H1 (cell line): ENCODE measurements at regions of chr1 and their contacts with region 1.

Region 1: DNA sequence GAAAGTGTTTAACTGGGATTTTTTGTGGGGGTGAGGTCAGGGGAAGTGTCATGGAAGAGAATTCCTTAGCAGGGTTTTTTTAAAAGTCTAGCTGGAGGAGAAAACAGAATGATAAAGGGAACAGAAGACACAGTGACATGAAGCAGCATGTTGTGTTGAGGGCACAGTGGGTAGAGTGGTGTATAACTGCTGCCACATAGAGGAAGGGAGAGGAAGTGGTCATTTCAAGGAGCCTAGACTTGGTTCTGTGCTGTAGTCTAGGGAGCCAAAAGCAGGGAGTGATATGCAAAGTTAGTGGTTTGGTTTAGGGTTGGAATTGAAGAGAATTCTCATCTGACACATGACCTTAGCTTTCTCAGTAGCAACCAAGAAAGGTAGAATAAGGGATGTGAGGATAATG is 10.2 kb downstream of the EEIG2 start:
- DNase-seq: no peak
- H3K4me3 ChIP-seq: no peak overlapping the region
- H3K27ac ChIP-seq: no peak overlapping the region
- H3K4me1 ChIP-seq: no peaks in the 10 kb centered on the region
- H3K27me3 ChIP-seq: no peaks in the 10 kb centered on the region
- CTCF ChIP-seq: peak; percentile 7 to 76 (median 57)
- EP300 ChIP-seq: no peak
- POLR2A ChIP-seq: no peak
- RAD21 ChIP-seq: peak; percentile 62 to 68

Region 2: DNA sequence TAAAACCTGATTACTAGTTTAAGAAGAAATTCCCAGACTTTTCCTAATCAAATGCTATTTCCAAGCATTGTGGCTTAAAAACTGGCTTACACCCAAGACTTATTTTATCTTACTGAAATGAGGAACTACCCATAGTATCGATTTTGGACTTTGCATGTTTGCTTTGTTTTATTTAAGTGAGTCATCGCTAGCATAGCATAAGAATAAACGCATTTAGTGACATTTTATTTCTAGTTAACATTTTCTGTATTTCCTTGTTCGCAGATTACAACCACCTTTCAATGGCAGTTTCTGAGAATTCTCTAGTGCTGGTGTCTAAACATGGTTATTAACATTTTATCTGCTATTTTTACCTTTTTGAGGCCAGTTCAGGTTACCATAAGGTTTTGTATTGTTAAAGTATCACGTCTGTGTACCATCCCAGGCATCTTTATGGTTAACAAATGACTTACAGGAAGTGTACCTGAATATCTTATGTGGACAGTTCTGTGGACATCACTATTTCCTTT is 14.3 kb after region 1 on chr1:
- CTCF ChIA-PET with region 1: interaction called, 12 read pairs
- POLR2A ChIA-PET with region 1: no interaction called
- DNase-seq: no peak
- H3K4me3 ChIP-seq: no peak overlapping the region
- H3K27ac ChIP-seq: no peak overlapping the region
- H3K4me1 ChIP-seq: no peaks in the 10 kb centered on the region
- H3K27me3 ChIP-seq: no peaks in the 10 kb centered on the region
- CTCF ChIP-seq: no peak
- EP300 ChIP-seq: no peak
- POLR2A ChIP-seq: no peak
- RAD21 ChIP-seq: no peak